AG04450 (cell line): ENCODE measurements at regions of chr15 and their contacts with region 1.

Region 1: DNA sequence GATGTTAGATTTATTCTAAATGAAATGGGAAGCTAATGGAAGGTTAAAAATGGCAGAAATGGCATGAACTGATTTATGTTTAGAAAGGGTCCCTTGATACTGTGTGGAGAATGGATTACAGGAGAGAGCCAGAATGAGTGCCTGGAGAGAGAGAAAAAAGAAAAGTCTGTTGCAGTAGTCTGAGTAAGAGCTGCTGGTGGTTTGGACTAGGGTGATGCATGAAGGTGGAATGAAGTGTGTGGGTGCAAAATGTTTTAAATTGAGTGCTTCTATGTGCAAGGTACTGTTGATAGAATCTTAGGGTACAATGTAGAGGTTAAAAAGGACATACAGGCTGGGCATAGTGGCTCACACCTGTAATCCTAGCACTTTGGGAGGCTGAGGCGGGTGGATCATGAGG is 11.4 kb upstream of the MGA start:
- DNase-seq: no peak
- H3K4me3 ChIP-seq: no peak overlapping the region
- H3K27ac ChIP-seq: no peak overlapping the region
- H3K27me3 ChIP-seq: no peaks in the 10 kb centered on the region
- CTCF ChIP-seq: no peak

Region 2: DNA sequence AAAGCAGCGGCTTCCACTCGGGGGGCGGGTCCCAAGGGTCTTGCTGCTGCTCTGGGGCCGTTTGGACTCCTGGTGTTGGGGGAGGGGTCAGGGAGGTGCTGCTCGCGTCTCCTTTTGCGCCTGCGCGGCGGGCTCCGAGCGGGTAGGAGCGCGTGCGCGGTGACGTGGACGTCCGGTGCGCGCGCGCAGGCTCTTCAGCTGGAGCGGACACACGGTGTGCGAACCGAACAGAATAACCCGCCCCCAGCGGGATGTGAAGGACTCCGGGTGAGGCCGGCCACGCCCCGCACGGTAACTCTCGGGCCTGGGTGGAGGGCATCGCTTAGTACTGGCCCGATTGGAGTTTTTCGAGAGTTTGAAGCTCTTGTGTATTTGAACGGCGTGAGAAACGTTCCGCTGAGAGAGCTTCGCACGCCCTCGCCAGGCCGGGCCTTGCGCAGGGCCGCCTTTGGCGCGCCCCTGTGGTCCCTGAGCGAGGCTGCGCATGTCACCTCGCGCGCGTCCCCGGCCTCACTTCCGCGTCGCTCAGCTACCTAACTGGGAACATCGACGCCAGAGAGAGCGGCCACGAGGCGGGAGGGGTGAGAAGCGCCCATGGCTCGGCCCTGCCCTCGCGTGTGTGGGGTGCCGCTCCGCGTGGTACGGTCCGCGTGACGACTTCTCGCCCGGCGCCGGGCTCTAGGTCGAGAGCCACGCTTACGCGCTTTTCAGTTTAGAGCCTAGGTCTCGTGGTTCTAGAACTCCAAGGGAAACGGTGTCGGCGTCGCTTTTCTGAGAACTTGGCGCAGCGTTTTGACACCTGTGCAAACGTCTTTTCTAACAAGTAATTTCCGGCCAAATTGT is 11.7 kb after region 1 on chr15 and contains the start of gene MGA:
- CTCF ChIA-PET with region 1: no interaction called
- POLR2A ChIA-PET with region 1: no interaction called
- DNase-seq: peak; percentile 81
- H3K4me3 ChIP-seq: peak within 1 kb of the TSS; percentile 69
- H3K27ac ChIP-seq: peak within 1 kb of the TSS; percentile 88
- H3K27me3 ChIP-seq: no peaks in the 10 kb centered on the region
- CTCF ChIP-seq: peak; percentile 15; the same call in 1 of the 2 replicates
- polyA plus RNA-seq, gene MGA: 8.5 and 9.7 TPM in 2 replicates

Region 3: DNA sequence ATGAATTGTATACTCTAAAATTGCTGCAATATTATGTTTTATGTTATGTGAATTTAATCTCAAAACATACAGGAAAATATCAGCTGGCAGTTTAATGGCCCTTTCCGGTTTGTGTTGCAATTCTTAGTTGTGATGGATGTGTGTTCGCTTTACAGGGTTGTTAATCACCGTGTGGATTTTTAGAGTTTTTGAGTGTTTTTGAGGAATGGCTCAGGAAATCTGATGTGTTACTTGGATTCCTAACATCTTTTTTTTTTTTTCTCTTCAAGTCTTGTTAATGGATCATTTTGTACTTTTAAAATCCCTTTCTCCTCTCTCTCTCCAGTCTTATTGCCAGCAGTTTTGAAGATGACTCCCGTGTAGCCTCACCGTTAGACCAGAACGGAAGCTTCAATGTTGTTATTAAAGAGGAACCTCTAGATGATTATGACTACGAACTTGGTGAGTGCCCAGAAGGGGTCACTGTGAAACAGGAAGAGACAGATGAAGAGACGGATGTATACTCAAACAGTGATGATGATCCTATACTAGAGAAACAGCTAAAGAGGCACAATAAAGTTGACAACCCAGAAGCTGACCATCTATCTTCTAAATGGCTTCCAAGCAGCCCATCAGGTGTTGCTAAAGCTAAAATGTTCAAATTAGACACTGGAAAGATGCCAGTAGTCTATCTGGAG is 47.1 kb after region 1 on chr15:
- CTCF ChIA-PET with region 1: no interaction called
- POLR2A ChIA-PET with region 1: interaction called, 11 read pairs
- DNase-seq: peak; percentile 16
- H3K4me3 ChIP-seq: no peak overlapping the region
- H3K27ac ChIP-seq: no peak overlapping the region
- H3K27me3 ChIP-seq: no peaks in the 10 kb centered on the region
- CTCF ChIP-seq: peak; percentile 51